Activated T-helper 2 cell treated with anti-CD3 and anti-CD28 coated beads, Interferon-gamma antibody, Interleukin-2, Interleukin-4, amounts not matched to agents 10 μg/mL and 5 μg/mL and 100 μg/mL, durations not matched to agents 14 hours and 24 hours and 36 hours (primary cell): ENCODE measurements at regions of chr6 and their contacts with region 1.

Region 1: DNA sequence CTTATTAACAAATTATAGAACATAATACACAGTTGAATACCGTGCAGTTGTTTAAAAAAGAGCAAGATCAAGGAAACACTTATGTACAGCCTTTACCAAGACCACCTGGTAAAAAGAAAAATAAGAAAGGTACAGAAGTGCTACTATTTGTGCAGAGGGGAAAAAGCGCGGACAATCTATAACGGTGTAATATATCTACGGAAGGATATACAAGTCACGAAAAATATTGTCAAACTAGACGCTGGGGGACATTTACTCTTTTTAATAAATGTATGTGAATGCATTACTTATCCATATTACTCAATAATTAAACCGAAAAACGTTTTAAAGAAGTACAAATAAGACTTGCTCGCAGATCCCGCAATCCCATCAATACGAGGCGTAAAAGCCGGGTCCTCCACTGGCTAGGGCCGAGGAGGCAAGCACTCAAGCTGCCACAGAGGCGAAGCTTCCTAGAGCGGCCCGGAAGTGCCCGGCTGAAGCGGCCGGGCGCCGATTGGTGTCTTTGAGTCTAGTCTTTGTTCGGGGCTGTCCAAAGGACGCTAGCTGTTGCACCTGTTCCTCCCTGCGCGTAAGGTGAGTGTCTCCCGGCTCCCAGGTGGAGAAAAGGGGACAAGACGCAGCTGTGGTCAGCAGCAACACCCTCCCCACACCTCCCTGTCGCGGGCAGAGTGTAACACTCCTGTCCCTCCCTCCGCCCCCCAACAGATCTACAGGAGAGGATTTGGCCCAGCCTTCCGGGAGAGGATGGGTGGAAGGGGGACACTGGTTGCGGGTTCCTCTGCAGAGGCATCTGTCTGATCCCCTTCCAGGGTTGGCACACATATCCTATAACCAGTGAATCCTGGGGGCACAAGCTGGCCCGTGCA is at the start of gene ZSCAN16:
- DNase-seq: peak; percentile 68
- H3K4me3 Mint-ChIP-seq: peak within 1 kb of the TSS; percentile 92
- H3K27ac Mint-ChIP-seq: peak within 1 kb of the TSS; percentile 75
- H3K4me1 Mint-ChIP-seq: peaks cover 35% of the 10 kb centered on the region
- H3K27me3 Mint-ChIP-seq: no peaks in the 10 kb centered on the region
- total RNA-seq, gene ZSCAN16: 4.0 TPM in 2 replicates

Region 2: GRCh38 chr6:28080631-28081485 is 43.5 kb before region 1 on chr6:
- intact Hi-C with region 1: loop called (anchors 5 kb)
- DNase-seq: peak; percentile 82
- H3K4me3 Mint-ChIP-seq: peak overlapping the region; percentile 93
- H3K27ac Mint-ChIP-seq: peak overlapping the region; percentile 93
- H3K4me1 Mint-ChIP-seq: peaks cover 13% of the 10 kb centered on the region
- H3K27me3 Mint-ChIP-seq: no peaks in the 10 kb centered on the region

Region 3: GRCh38 chr6:28145231-28145630 is 20.9 kb after region 1 on chr6:
- intact Hi-C with region 1: no loop called
- DNase-seq: no peak
- H3K4me3 Mint-ChIP-seq: no peak overlapping the region
- H3K27ac Mint-ChIP-seq: no peak overlapping the region
- H3K4me1 Mint-ChIP-seq: peaks cover 34% of the 10 kb centered on the region
- H3K27me3 Mint-ChIP-seq: no peaks in the 10 kb centered on the region

Region 4: GRCh38 chr6:28390688-28391087 is 266.4 kb after region 1 on chr6:
- intact Hi-C with region 1: no loop called
- DNase-seq: no peak
- H3K4me3 Mint-ChIP-seq: no peak overlapping the region
- H3K27ac Mint-ChIP-seq: no peak overlapping the region
- H3K4me1 Mint-ChIP-seq: peaks cover 10% of the 10 kb centered on the region
- H3K27me3 Mint-ChIP-seq: no peaks in the 10 kb centered on the region